ENCODE measurements at regions of chr15 and their contacts with region 1.

Region 1: GRCh38 chr15:81265944-81266775 is 57.8 kb downstream of the STARD5 start:
- DNase-seq: peak; percentile 86 to 90 (median 87)
- H3K4me3 ChIP-seq: peak overlapping the region; percentile 32 to 40 (median 34)
- H3K27ac ChIP-seq: no peak overlapping the region
- H3K4me1 ChIP-seq: peaks cover 0 to 9% (median 5%) of the 10 kb centered on the region in 3 donors
- H3K27me3 ChIP-seq: no peaks in the 10 kb centered on the region
- CTCF ChIP-seq: peak; percentile 88

Region 2: GRCh38 chr15:81091889-81092558 is 174.1 kb before region 1 on chr15:
- intact Hi-C with region 1: no loop called
- DNase-seq: peak in 3 of 5 donors; percentile 21 to 64 (median 61)
- H3K4me3 ChIP-seq: peak overlapping the region in 1 of 3 donors; percentile 21
- H3K27ac ChIP-seq: no peak overlapping the region
- H3K4me1 ChIP-seq: peaks cover 0 to 3% (median 2%) of the 10 kb centered on the region in 3 donors
- H3K27me3 ChIP-seq: no peaks in the 10 kb centered on the region
- CTCF ChIP-seq: no peak

Region 3: GRCh38 chr15:81106560-81106959 is 159.6 kb before region 1 on chr15:
- intact Hi-C with region 1: loop called (anchors 10 kb)
- DNase-seq: peak in 4 of 5 donors; percentile 46 to 80 (median 68)
- H3K4me3 ChIP-seq: no peak overlapping the region
- H3K27ac ChIP-seq: no peak overlapping the region
- H3K4me1 ChIP-seq: no peaks in the 10 kb centered on the region
- H3K27me3 ChIP-seq: no peaks in the 10 kb centered on the region
- CTCF ChIP-seq: peak; percentile 84

Region 4: DNA sequence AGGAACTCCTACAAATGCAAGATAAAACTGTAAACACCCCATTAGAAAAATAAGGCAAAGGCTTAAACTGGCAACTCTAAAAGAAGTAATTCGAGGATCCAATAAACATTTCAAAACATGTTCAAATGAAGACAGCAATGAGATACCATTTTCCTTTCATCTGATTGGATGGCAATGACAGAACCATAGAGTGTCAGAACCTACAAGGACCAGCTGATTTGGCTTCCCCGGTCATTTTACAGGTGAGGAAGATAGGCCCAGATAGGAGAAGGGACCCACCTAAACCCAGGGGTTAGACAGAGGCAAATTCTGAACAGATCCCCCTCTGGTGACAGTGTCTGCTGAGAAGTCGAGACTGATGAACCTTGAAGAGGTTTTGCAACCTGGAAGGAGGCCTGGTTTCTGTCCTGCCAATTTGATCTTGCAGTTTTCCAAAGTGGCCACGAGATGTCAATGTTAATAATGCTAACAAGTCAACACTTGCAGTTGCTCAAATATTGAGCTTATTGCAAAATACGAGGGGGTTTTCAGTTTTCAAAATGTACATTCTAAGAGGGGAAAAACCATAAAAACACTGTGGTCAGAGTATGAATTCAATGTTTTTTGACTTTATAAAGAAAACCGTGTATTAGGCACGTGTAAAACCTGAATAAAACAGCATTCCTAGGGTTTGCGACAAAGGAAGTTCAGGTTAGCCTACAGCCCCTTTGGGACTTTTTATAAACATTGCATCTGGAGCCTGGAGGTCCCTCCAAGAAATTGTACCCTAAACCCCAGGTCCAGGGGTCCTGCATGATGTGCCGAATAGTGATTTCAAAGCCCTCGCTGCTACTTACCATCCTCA is 110.6 kb before region 1 on chr15:
- intact Hi-C with region 1: loop called (anchors 10 kb)
- DNase-seq: peak in 2 of 5 donors; percentile 14 to 41
- H3K4me3 ChIP-seq: no peak overlapping the region
- H3K27ac ChIP-seq: no peak overlapping the region
- H3K4me1 ChIP-seq: peaks cover 0 to 3% (median 0%) of the 10 kb centered on the region in 3 donors
- H3K27me3 ChIP-seq: no peaks in the 10 kb centered on the region
- CTCF ChIP-seq: peak; percentile 57

Region 5: DNA sequence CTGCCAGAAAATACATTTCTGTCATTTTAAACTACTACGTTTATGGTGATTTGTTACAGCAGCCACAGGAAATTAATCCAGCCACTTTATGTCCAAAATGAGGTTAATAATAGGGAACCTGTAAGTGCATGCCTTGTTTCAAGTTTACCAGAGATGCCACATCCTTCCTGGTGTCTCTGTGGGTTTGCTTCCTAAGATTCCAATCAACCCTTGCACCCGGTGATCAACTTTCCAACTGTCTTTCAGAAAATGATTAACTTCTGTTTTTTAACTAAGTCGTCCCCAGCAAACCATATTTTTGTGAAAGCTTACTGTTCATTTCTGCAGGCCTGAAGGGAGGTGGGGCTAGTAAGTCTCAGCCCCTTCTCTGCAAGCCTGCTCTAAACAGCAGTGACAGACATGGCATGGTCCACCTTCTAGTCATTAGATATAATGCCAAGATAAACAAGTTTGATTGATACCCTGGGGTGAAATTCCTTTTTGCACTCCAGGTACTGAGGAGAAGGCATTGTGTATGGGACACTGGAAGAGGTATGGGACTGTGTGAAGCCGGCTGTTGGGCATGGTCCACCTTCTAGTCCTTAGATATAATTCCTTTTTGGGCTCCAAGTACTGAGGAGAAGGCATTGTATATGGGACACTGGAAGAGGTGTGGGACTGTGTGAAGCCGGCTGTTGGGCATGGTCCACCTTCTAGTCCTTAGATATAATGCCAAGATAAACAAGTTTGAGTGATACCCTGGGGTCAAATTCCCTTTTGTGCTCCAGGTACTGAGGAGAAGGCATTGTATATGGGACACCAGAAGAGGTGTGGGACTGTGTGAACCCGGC is 118.9 kb after region 1 on chr15:
- intact Hi-C with region 1: no loop called
- DNase-seq: no peak
- H3K4me3 ChIP-seq: no peak overlapping the region
- H3K27ac ChIP-seq: no peak overlapping the region
- H3K4me1 ChIP-seq: no peaks in the 10 kb centered on the region
- H3K27me3 ChIP-seq: no peaks in the 10 kb centered on the region
- CTCF ChIP-seq: no peak

Measured in kidney (tissue), 22 donors.